ENCODE measurements at regions of chr11 and their contacts with region 1.

Region 1: GRCh38 chr11:59753650-59754493 is 1.3 kb upstream of the STX3 start:
- DNase-seq: peak; percentile 85
- H3K4me3 ChIP-seq: peak overlapping the region; percentile 72
- H3K27ac ChIP-seq: no peak overlapping the region
- H3K4me1 ChIP-seq: peaks cover 5% of the 10 kb centered on the region
- H3K27me3 ChIP-seq: no peaks in the 10 kb centered on the region
- CTCF ChIP-seq: peak; percentile 98

Region 2: DNA sequence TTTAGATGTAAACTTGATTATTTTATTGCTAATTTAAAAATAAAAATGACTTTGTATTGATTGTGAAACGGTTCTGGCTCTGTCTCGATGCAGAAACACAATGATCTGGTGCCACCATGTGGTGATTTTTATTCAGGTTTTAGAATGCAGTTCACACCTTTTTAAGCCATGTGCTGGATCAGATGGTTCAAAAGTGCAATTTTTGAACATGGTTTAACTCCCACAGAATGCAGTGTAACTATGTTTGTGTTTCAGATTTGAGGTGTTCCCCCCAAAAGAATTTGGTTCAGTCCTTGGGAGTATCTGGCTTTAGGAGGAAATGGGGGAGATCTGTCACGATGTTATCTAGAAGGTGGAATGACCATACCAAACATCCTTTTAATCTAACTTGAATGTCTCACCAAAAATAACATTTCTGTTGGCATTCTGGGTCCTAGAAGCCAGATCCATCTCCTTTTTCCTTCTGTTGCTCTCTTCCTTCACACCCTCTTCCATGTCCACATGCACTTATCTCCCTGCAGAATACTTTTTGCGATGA is 48.8 kb after region 1 on chr11:
- CTCF ChIA-PET with region 1: interaction called, 5 read pairs
- POLR2A ChIA-PET with region 1: no interaction called
- intact Hi-C with region 1: loop called (anchors 1 kb)
- DNase-seq: peak; percentile 70
- H3K4me3 ChIP-seq: no peak overlapping the region
- H3K27ac ChIP-seq: no peak overlapping the region
- H3K4me1 ChIP-seq: no peaks in the 10 kb centered on the region
- H3K27me3 ChIP-seq: no peaks in the 10 kb centered on the region
- CTCF ChIP-seq: peak; percentile 82

Region 3: GRCh38 chr11:59918987-59919589 is 165.2 kb after region 1 on chr11:
- CTCF ChIA-PET with region 1: interaction called, 13 read pairs
- POLR2A ChIA-PET with region 1: no interaction called
- intact Hi-C with region 1: loop called (anchors 1 kb)
- DNase-seq: peak; percentile 77
- H3K4me3 ChIP-seq: no peak overlapping the region
- H3K27ac ChIP-seq: no peak overlapping the region
- H3K4me1 ChIP-seq: no peaks in the 10 kb centered on the region
- H3K27me3 ChIP-seq: no peaks in the 10 kb centered on the region
- CTCF ChIP-seq: peak; percentile 71

Measured in A673 (cell line).